ENCODE measurements at regions of chr17 and their contacts with region 1.

Region 1: GRCh38 chr17:68539548-68540467 is 27.6 kb downstream of the PRKAR1A start:
- DNase-seq: peak; percentile 34
- H3K4me3 ChIP-seq: no peak overlapping the region
- H3K27ac ChIP-seq: no peak overlapping the region
- H3K4me1 ChIP-seq: no peaks in the 10 kb centered on the region
- H3K27me3 ChIP-seq: no peaks in the 10 kb centered on the region

Region 2: GRCh38 chr17:68489919-68490318 is 49.9 kb before region 1 on chr17:
- in situ Hi-C with region 1: no loop called
- DNase-seq: no peak
- H3K4me3 ChIP-seq: no peak overlapping the region
- H3K27ac ChIP-seq: no peak overlapping the region
- H3K4me1 ChIP-seq: 0 out of 2 replicates have a peak, but pooled peaks cover 3% of the 10 kb centered on the region
- H3K27me3 ChIP-seq: peaks cover 12% of the 10 kb centered on the region

Region 3: GRCh38 chr17:68759343-68760132 is 219.7 kb after region 1 on chr17:
- in situ Hi-C with region 1: loop called (anchors 5 kb)
- DNase-seq: peak; percentile 98
- H3K4me3 ChIP-seq: peak overlapping the region; percentile 77
- H3K27ac ChIP-seq: peak overlapping the region; percentile 93
- H3K4me1 ChIP-seq: peaks cover 7% of the 10 kb centered on the region
- H3K27me3 ChIP-seq: no peaks in the 10 kb centered on the region

Measured in GM23248 (cell line).